Endothelial cell of umbilical vein (primary cell): ENCODE measurements at regions of chr6 and their contacts with region 1.

Region 1: DNA sequence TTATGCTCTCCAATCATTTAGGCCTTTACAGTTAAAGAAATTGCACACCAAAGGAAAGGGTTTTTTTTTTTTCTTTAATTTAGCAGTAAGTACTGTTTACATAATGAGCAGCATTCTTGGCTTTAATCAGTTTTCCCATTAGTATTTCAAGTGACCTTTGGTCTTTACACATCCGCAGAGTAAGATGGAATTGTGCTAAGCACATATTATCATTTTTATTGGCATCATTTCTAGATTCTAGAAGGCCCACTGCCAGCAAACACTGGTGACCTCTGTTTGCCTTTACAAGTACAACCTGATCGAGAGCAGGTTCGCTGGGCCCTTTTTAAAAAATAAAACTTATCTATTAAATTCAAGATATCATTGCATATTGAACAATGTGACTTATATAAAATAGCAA is 104.3 kb downstream of the ADGRG6 start:
- DNase-seq: peak; percentile 99
- H3K4me3 ChIP-seq: no peak overlapping the region
- H3K27ac ChIP-seq: peak overlapping the region; percentile 97
- H3K4me1 ChIP-seq: peaks cover 69% of the 10 kb centered on the region
- H3K27me3 ChIP-seq: no peaks in the 10 kb centered on the region
- CTCF ChIP-seq: no peak
- POLR2A ChIP-seq: peak; percentile 41

Region 2: GRCh38 chr6:142395768-142396231 is 10.3 kb before region 1 on chr6:
- CTCF ChIA-PET with region 1: interaction called, 9 read pairs
- POLR2A ChIA-PET with region 1: no interaction called
- dilution Hi-C with region 1: no loop called
- intact Hi-C with region 1: loop called (anchors 1 kb)
- DNase-seq: peak; percentile 94
- H3K4me3 ChIP-seq: no peak overlapping the region
- H3K27ac ChIP-seq: peak overlapping the region; percentile 99
- H3K4me1 ChIP-seq: peaks cover 47% of the 10 kb centered on the region
- H3K27me3 ChIP-seq: no peaks in the 10 kb centered on the region
- CTCF ChIP-seq: no peak
- POLR2A ChIP-seq: no peak

Region 3: DNA sequence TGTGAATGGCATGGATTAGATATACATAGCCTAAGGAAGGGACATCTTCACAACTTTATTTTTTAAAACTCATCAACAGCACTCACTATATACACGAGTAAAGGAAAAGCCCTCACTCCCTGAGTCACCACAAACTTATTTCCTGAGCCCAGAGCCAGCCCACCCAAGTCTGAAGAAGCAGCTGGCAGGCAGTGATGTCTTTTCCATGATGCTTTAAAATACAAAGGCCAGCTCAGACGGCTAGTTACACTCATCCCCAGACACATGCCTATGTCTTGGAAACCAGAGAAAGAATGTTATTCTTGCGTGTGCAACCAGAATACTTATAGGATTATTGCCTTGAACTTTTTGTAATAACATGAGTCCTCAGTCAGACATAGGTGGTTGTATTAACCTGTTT is 10.0 kb after region 1 on chr6:
- CTCF ChIA-PET with region 1: interaction called, 7 read pairs
- POLR2A ChIA-PET with region 1: interaction called, 3 read pairs
- dilution Hi-C with region 1: no loop called
- intact Hi-C with region 1: loop called (anchors 1 kb)
- DNase-seq: peak; percentile 93
- H3K4me3 ChIP-seq: no peak overlapping the region
- H3K27ac ChIP-seq: peak overlapping the region; percentile 99
- H3K4me1 ChIP-seq: peaks cover 56% of the 10 kb centered on the region
- H3K27me3 ChIP-seq: no peaks in the 10 kb centered on the region
- CTCF ChIP-seq: no peak
- POLR2A ChIP-seq: peak; percentile 22

Region 4: DNA sequence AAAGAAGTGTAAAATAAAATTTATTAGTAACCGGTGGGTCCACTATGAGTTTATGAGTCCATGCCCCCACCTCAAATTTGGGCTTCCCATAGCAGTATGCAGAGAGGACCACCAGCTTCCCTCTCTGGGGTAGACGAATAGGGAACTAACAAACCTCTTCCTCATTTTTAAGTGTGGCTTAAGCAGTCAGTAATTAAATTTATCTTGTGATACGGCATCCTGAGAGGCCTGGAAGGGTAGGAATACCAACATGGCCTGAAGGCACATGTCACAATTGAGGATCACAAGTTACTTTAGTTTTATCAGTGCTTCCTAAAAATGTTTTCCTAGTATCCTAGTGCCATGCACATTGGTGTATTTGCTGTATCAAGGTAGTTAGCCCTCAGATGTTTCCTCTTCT is 298.9 kb after region 1 on chr6:
- CTCF ChIA-PET with region 1: no interaction called
- POLR2A ChIA-PET with region 1: no interaction called
- dilution Hi-C with region 1: no loop called
- intact Hi-C with region 1: no loop called
- DNase-seq: no peak
- H3K4me3 ChIP-seq: no peak overlapping the region
- H3K27ac ChIP-seq: no peak overlapping the region
- H3K4me1 ChIP-seq: peaks cover 7% of the 10 kb centered on the region
- H3K27me3 ChIP-seq: no peaks in the 10 kb centered on the region
- CTCF ChIP-seq: no peak
- POLR2A ChIP-seq: no peak